Sigmoid colon (tissue), 7 donors: ENCODE measurements at regions of chr2 and their contacts with region 1.

Region 1: GRCh38 chr2:131492418-131493198 is 411 bp upstream of the MZT2A start:
- DNase-seq: peak; percentile 94
- H3K4me3 ChIP-seq: peak overlapping the region; percentile 71 to 81 (median 78)
- H3K27ac ChIP-seq: peak overlapping the region; percentile 83 to 88 (median 84)
- H3K4me1 ChIP-seq: peaks cover 0 to 30% (median 20%) of the 10 kb centered on the region in 4 donors
- H3K27me3 ChIP-seq: no peaks in the 10 kb centered on the region
- CTCF ChIP-seq: peak; percentile 65 to 84 (median 69)
- EP300 ChIP-seq: no peak
- POLR2A ChIP-seq: no peak

Region 2: GRCh38 chr2:131105156-131105949 is 387.3 kb before region 1 on chr2 and contains the start of gene PLEKHB2:
- intact Hi-C with region 1: loop called (anchors 5 kb)
- DNase-seq: peak; percentile 94
- H3K4me3 ChIP-seq: peak within 1 kb of the TSS; percentile 75 to 98 (median 87)
- H3K27ac ChIP-seq: peak within 1 kb of the TSS; percentile 85 to 94 (median 90)
- H3K4me1 ChIP-seq: peaks cover 0 to 31% (median 23%) of the 10 kb centered on the region in 4 donors
- H3K27me3 ChIP-seq: no peaks in the 10 kb centered on the region
- CTCF ChIP-seq: no peak
- EP300 ChIP-seq: no peak
- POLR2A ChIP-seq: peak; percentile 79 to 93
- total RNA-seq, gene PLEKHB2: 28.8 to 39.6 (median 33.7) TPM

Region 3: GRCh38 chr2:131521961-131522794 is 29.6 kb after region 1 on chr2:
- intact Hi-C with region 1: loop called (anchors 2 kb)
- DNase-seq: peak; percentile 62
- H3K4me3 ChIP-seq: no peak overlapping the region
- H3K27ac ChIP-seq: no peak overlapping the region
- H3K4me1 ChIP-seq: peaks cover 0 to under 1% (median 0%) of the 10 kb centered on the region in 4 donors
- H3K27me3 ChIP-seq: no peaks in the 10 kb centered on the region
- CTCF ChIP-seq: no peak
- EP300 ChIP-seq: no peak
- POLR2A ChIP-seq: no peak